ENCODE measurements at regions of chr3 and their contacts with region 1.

Region 1: DNA sequence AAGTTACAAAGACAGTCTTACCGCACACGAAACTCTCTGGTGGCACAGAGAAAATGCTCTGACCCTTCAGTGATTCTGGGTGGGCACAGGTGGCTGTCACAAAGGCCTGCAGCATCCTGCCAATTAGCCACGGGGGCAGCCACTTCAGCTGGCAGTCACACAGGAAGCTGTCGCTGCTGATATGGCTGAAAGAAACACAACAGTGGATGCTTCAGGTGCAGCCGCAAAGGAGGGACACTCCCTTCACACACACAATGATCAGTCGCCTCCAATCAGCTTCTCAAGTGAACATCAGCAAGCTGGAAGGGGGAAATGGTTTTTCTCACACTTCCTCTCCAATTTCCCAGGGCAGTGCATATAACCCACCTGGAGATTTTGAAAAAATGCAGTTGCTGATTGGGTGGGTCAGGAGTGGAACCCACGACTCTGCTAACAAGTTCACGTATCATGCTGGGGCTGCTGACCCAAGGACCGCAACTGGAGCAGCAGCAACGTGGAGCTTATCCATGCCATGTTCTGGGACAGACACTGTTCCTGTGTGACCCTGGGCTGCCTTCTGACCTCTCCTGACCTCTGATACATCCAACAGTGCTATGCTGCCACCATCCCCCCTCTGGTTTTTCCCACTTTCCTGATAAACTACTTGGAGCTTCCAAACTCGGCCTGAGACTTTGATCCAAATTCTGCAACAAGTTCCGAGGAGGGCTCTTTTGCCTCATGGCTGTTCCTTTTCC is 106.6 kb downstream of the LRIG1 start:
- DNase-seq: no peak
- ATAC-seq: peak; percentile 42
- H3K4me3 ChIP-seq: no peak overlapping the region
- H3K27ac ChIP-seq: peak overlapping the region; percentile 31 to 91
- H3K4me1 ChIP-seq: peaks cover 8 to 11% of the 10 kb centered on the region in 2 donors
- H3K27me3 ChIP-seq: no peaks in the 10 kb centered on the region

Region 2: DNA sequence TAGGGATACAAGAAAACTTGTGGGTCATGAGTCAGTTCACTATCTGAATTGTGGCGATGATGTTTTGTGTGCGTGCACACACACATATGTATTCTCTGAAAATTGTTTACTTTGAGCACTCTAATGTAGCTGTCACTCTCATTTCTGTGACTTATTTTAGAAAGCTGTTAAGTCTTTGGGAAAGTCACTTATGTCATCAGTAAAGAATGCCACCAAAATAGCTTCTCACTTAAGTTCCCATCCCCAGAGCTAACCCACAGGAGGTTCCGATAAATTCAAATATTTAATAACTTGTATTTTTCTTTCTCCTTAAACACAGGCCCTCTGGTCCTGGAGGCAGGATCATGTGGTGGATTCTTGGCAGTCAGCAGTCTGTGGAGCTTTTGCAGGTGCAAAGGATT is 31.6 kb before region 1 on chr3:
- intact Hi-C with region 1: loop called in 1 of 2 experiments (anchors 2 kb)
- DNase-seq: no peak
- ATAC-seq: no peak
- H3K4me3 ChIP-seq: no peak overlapping the region
- H3K27ac ChIP-seq: no peak overlapping the region
- H3K4me1 ChIP-seq: peaks cover 2 to 6% of the 10 kb centered on the region in 2 donors
- H3K27me3 ChIP-seq: no peaks in the 10 kb centered on the region

Region 3: DNA sequence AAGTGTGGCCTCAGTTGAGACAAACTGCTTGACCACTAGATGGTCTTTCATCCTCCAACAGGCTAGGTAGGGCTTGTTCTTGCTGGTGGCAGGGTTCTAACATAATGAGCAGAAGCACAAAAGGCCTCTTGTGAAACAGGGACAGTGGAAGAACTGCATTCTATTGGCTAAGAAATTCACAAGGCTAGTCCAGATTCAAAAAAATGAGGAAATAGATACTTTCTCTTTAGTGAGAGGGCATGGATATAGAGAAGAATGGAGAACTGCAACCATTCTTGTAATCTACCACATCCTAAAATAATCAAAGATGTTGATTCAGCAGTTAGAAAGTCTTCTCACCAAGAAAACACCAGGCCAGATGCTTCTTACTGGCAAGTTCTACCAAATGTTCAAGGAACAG is 250.4 kb after region 1 on chr3:
- intact Hi-C with region 1: no loop called
- DNase-seq: no peak
- ATAC-seq: no peak
- H3K4me3 ChIP-seq: no peak overlapping the region
- H3K27ac ChIP-seq: no peak overlapping the region
- H3K4me1 ChIP-seq: no peaks in the 10 kb centered on the region
- H3K27me3 ChIP-seq: no peaks in the 10 kb centered on the region

Measured in aorta (tissue), 5 donors.